MCF 10A (cell line): ENCODE measurements at regions of chr5 and their contacts with region 1.

Region 1: GRCh38 chr5:149141224-149141956 is at the start of gene ABLIM3:
- DNase-seq: peak; percentile 85
- H3K4me3 Mint-ChIP-seq: peak within 1 kb of the TSS; percentile 82
- H3K27ac Mint-ChIP-seq: peak within 1 kb of the TSS; percentile 78
- H3K4me1 Mint-ChIP-seq: peaks cover 51% of the 10 kb centered on the region
- H3K27me3 Mint-ChIP-seq: no peaks in the 10 kb centered on the region
- CTCF ChIP-seq: peak; percentile 99
- total RNA-seq, gene ABLIM3: 168 and 206 TPM in 2 replicates

Region 2: GRCh38 chr5:149153751-149154610 is 12.6 kb after region 1 on chr5:
- CTCF ChIA-PET with region 1: interaction called, 93 read pairs
- POLR2A ChIA-PET with region 1: interaction called, 100 read pairs
- intact Hi-C with region 1: loop called (anchors 1 kb)
- DNase-seq: peak; percentile 87
- H3K4me3 Mint-ChIP-seq: peak overlapping the region; percentile 3
- H3K27ac Mint-ChIP-seq: peak overlapping the region; percentile 81
- H3K4me1 Mint-ChIP-seq: peaks cover 61% of the 10 kb centered on the region
- H3K27me3 Mint-ChIP-seq: no peaks in the 10 kb centered on the region
- CTCF ChIP-seq: no peak

Region 3: DNA sequence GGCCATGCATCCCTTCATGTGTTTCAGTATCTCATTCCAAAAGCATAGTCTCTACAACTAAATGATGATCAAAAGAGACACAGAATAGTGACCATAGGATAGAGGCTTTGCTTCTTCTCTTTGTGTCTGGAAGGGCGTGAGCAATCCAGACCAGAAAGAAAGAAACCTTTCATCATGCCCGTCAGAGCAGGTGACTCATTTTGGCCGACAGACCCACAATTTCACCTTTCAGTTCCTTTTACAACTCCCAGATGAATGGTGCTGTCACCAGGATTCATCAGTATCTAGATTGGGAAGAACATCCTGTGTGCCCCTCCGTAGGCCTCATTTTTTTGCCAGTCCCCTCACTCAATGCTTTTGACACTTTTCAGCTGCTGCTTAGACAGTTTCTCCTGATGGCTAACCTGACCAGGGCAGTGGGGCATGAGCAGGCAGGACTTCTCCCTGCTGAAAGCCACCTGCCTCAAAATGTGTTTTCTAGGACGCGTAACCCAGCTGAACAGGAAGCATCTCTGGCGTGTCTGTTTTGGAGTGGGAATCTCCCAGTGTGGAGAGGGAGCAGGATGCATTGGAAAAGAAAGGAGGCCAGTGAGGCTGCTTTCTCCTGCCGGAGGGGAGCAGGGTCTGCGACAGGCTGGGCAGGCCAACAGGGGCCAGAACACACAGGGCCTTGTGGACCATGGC is 21.2 kb after region 1 on chr5:
- CTCF ChIA-PET with region 1: interaction called, 63 read pairs
- POLR2A ChIA-PET with region 1: interaction called, 13 read pairs
- intact Hi-C with region 1: no loop called
- DNase-seq: peak; percentile 77
- H3K4me3 Mint-ChIP-seq: no peak overlapping the region
- H3K27ac Mint-ChIP-seq: peak overlapping the region; percentile 83
- H3K4me1 Mint-ChIP-seq: peaks cover 69% of the 10 kb centered on the region
- H3K27me3 Mint-ChIP-seq: no peaks in the 10 kb centered on the region
- CTCF ChIP-seq: no peak

Region 4: DNA sequence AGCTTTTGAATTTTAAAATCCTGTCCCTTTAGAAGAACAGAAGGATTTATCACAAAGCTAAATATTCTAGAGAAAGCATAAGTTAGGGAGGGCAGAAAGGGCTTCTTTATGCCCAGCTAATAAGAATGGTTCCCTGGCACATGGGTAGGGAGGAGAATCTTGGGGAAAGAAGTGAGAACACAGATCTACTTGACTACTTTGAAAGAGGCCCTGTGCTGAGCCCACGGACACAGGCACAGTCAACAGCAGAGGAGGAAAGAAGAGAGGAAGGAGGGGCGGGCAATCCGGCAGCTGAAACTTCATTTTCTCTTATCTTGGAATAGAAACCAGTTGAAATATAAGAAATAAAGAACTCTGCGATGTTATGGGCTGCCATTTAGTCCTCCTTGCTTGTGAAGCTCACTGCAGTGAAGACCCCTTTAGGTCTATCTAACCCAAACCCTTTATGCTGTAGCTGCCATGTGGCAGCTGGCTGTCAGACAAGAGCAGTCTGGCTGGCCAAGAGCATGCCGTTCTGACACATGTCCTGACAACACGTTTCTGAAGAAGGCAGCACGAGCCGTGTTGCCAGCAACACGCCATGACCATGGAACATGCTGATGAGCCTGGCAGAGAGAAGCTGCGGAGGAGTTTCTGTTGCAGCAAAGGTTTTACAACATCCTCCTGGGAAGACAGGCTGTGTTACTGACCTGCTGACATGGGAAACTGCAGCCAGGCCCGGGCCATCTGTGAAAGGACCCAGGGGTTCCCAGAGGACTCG is 34.1 kb after region 1 on chr5:
- CTCF ChIA-PET with region 1: interaction called, 17 read pairs
- POLR2A ChIA-PET with region 1: interaction called, 5 read pairs
- intact Hi-C with region 1: no loop called
- DNase-seq: no peak
- H3K4me3 Mint-ChIP-seq: no peak overlapping the region
- H3K27ac Mint-ChIP-seq: peak overlapping the region; percentile 72
- H3K4me1 Mint-ChIP-seq: peaks cover 40% of the 10 kb centered on the region
- H3K27me3 Mint-ChIP-seq: no peaks in the 10 kb centered on the region
- CTCF ChIP-seq: no peak

Region 5: DNA sequence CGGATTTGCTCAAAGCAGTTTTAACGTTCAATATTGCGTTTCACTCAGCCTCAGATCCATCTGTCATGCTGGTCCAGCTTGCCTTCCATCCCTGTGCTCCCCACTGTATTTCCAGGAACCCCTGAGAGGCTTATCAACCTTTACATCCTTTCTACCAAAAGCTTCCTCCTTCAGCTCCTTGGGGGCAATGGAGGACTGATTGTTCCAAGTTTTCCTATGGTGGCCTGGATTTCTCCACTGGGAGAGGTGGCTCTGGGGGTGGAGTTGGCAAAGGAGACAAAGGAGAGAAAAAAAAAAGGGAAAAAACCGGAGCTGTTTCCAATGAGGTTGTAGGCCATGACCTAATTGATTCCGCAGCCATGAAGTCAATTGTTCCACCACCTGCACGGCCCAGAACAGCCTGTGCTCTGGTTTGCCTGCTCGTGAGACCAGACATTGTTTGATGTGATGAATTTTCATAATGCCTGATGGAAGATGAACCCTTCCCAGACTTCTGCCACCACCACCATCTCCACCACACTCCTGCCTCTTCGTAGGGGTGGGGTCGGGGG is 54.0 kb after region 1 on chr5:
- CTCF ChIA-PET with region 1: interaction called, 9 read pairs
- POLR2A ChIA-PET with region 1: interaction called, 4 read pairs
- intact Hi-C with region 1: loop called (anchors 1 kb)
- DNase-seq: no peak
- H3K4me3 Mint-ChIP-seq: no peak overlapping the region
- H3K27ac Mint-ChIP-seq: no peak overlapping the region
- H3K4me1 Mint-ChIP-seq: peaks cover 14% of the 10 kb centered on the region
- H3K27me3 Mint-ChIP-seq: no peaks in the 10 kb centered on the region
- CTCF ChIP-seq: no peak

Region 6: GRCh38 chr5:149268928-149269557 is 127.7 kb after region 1 on chr5:
- CTCF ChIA-PET with region 1: interaction called, 37 read pairs
- POLR2A ChIA-PET with region 1: interaction called, 4 read pairs
- intact Hi-C with region 1: no loop called
- DNase-seq: peak; percentile 84
- H3K4me3 Mint-ChIP-seq: no peak overlapping the region
- H3K27ac Mint-ChIP-seq: no peak overlapping the region
- H3K4me1 Mint-ChIP-seq: peaks cover 14% of the 10 kb centered on the region
- H3K27me3 Mint-ChIP-seq: no peaks in the 10 kb centered on the region
- CTCF ChIP-seq: peak; percentile 91

Region 7: GRCh38 chr5:149860801-149861322 is 719.5 kb after region 1 on chr5:
- CTCF ChIA-PET with region 1: no interaction called
- POLR2A ChIA-PET with region 1: no interaction called
- intact Hi-C with region 1: no loop called
- DNase-seq: peak; percentile 94
- H3K4me3 Mint-ChIP-seq: no peak overlapping the region
- H3K27ac Mint-ChIP-seq: peak overlapping the region; percentile 21
- H3K4me1 Mint-ChIP-seq: peaks cover 38% of the 10 kb centered on the region
- H3K27me3 Mint-ChIP-seq: no peaks in the 10 kb centered on the region
- CTCF ChIP-seq: no peak